MCF 10A (cell line): ENCODE measurements at regions of chr11 and their contacts with region 1.

Region 1: GRCh38 chr11:94973099-94973968 is at the starts of genes CWC15 and KDM4D:
- DNase-seq: peak; percentile 94
- H3K4me3 Mint-ChIP-seq: peak within 1 kb of the TSS; percentile 86
- H3K27ac Mint-ChIP-seq: peak within 1 kb of the TSS; percentile 96
- H3K4me1 Mint-ChIP-seq: peaks cover 24% of the 10 kb centered on the region
- H3K27me3 Mint-ChIP-seq: no peaks in the 10 kb centered on the region
- CTCF ChIP-seq: no peak
- total RNA-seq, gene CWC15: 59.6 and 61.9 TPM in 2 replicates
- total RNA-seq, gene KDM4D: 1.1 and 1.3 TPM in 2 replicates

Region 2: GRCh38 chr11:94958121-94958696 is 15.1 kb before region 1 on chr11:
- CTCF ChIA-PET with region 1: interaction called, 13 read pairs
- POLR2A ChIA-PET with region 1: interaction called, 6 read pairs
- intact Hi-C with region 1: no loop called
- DNase-seq: no peak
- H3K4me3 Mint-ChIP-seq: no peak overlapping the region
- H3K27ac Mint-ChIP-seq: peak overlapping the region; percentile 73
- H3K4me1 Mint-ChIP-seq: peaks cover 8% of the 10 kb centered on the region
- H3K27me3 Mint-ChIP-seq: no peaks in the 10 kb centered on the region
- CTCF ChIP-seq: no peak

Region 3: GRCh38 chr11:95024958-95025357 is 51.6 kb after region 1 on chr11 and contains the start of gene KDM4E:
- CTCF ChIA-PET with region 1: no interaction called
- POLR2A ChIA-PET with region 1: no interaction called
- intact Hi-C with region 1: no loop called
- DNase-seq: no peak
- H3K4me3 Mint-ChIP-seq: no peak within 1 kb of the TSS
- H3K27ac Mint-ChIP-seq: no peak within 1 kb of the TSS
- H3K4me1 Mint-ChIP-seq: no peaks in the 10 kb centered on the region
- H3K27me3 Mint-ChIP-seq: no peaks in the 10 kb centered on the region
- CTCF ChIP-seq: no peak
- total RNA-seq, gene KDM4E: not detected in 2 replicates

Region 4: DNA sequence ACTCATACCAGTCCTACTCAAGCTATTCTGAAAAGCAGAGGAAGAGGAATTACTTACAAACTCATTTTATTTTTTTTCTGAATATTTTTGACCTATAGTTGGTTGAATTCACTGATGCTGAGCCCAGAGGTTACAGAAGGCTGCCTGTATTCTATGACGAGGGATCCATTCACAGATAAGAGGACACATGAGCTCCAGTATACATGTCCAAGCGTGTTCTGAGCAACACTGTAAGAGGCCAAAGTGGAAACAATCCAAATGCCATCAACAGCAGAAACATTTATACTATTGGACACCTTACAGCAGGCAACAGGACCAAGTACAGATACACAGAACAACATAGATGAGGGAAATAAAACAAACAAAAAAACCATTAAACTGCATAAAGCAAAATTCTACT is 62.0 kb after region 1 on chr11:
- CTCF ChIA-PET with region 1: interaction called, 3 read pairs
- POLR2A ChIA-PET with region 1: interaction called, 10 read pairs
- intact Hi-C with region 1: no loop called
- DNase-seq: peak; percentile 36
- H3K4me3 Mint-ChIP-seq: no peak overlapping the region
- H3K27ac Mint-ChIP-seq: no peak overlapping the region
- H3K4me1 Mint-ChIP-seq: peaks cover 9% of the 10 kb centered on the region
- H3K27me3 Mint-ChIP-seq: no peaks in the 10 kb centered on the region
- CTCF ChIP-seq: no peak

Region 5: GRCh38 chr11:95089620-95090542 is 116.5 kb after region 1 on chr11 and contains the start of gene ENDOD1:
- CTCF ChIA-PET with region 1: interaction called, 3 read pairs
- POLR2A ChIA-PET with region 1: interaction called, 15 read pairs
- intact Hi-C with region 1: no loop called
- DNase-seq: peak; percentile 80
- H3K4me3 Mint-ChIP-seq: peak within 1 kb of the TSS; percentile 85
- H3K27ac Mint-ChIP-seq: peak within 1 kb of the TSS; percentile 64
- H3K4me1 Mint-ChIP-seq: peaks cover 36% of the 10 kb centered on the region
- H3K27me3 Mint-ChIP-seq: no peaks in the 10 kb centered on the region
- CTCF ChIP-seq: no peak
- total RNA-seq, gene ENDOD1: 10.8 and 11.4 TPM in 2 replicates

Region 6: GRCh38 chr11:95764267-95764898 is 791.0 kb after region 1 on chr11:
- CTCF ChIA-PET with region 1: interaction called, 3 read pairs
- POLR2A ChIA-PET with region 1: interaction called, 5 read pairs
- intact Hi-C with region 1: loop called (anchors 5 kb)
- DNase-seq: peak; percentile 54
- H3K4me3 Mint-ChIP-seq: no peak overlapping the region
- H3K27ac Mint-ChIP-seq: no peak overlapping the region
- H3K4me1 Mint-ChIP-seq: peaks cover 10% of the 10 kb centered on the region
- H3K27me3 Mint-ChIP-seq: no peaks in the 10 kb centered on the region
- CTCF ChIP-seq: peak; percentile 61